Activated CD8-positive, alpha-beta T cell treated with anti-CD3 and anti-CD28 coated beads for 36 hours (primary cell): ENCODE measurements at regions of chr21 and their contacts with region 1.

Region 1: DNA sequence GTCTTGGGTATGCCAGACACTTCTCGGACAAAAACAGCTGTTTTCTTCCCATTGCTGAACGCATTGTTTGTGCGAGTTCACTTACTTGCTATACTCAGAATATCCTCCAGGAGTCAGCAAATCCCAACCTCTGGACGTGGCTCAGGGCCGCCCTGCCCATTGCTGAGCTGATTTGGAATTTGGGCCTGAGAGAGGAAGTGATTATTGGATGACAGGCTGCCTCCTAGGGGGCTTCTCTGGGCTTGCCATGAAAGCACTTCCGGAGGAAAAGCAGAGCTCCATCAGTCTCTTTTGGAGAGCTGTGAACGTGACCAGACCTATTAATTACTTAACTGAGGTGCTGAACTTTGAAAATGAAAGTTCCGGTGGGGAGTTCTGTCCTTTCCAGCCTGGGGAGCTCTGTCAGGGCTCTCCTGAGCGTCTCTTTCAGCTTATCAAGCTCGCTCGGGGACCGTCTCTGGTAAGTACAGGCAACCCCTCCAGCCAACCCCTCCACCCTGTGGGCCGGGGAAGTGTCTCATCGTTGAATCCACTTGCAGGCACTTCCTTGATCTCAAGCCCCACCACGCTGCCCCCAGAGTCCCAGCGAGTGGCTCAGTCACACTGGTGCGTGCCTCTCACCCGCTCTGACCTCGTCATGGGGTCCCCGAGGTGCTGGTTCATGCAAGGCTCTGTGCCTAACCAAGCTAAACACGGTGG is 76.9 kb downstream of the CLIC6 start:
- DNase-seq: peak; percentile 69
- ATAC-seq: peak; percentile 95
- H3K4me3 Mint-ChIP-seq: peak overlapping the region; percentile 44
- H3K27ac Mint-ChIP-seq: peak overlapping the region; percentile 30
- H3K4me1 Mint-ChIP-seq: peaks cover 3% of the 10 kb centered on the region
- H3K27me3 Mint-ChIP-seq: peaks cover 11% of the 10 kb centered on the region
- CTCF ChIP-seq: peak; percentile 91

Region 2: GRCh38 chr21:34762761-34763160 is 17.1 kb after region 1 on chr21:
- CTCF ChIA-PET with region 1: interaction called, 11 read pairs
- POLR2A ChIA-PET with region 1: no interaction called
- intact Hi-C with region 1: no loop called
- DNase-seq: no peak
- ATAC-seq: no peak
- H3K4me3 Mint-ChIP-seq: no peak overlapping the region
- H3K27ac Mint-ChIP-seq: no peak overlapping the region
- H3K4me1 Mint-ChIP-seq: no peaks in the 10 kb centered on the region
- H3K27me3 Mint-ChIP-seq: no peaks in the 10 kb centered on the region
- CTCF ChIP-seq: no peak

Region 3: GRCh38 chr21:35400233-35400957 is 654.7 kb after region 1 on chr21:
- CTCF ChIA-PET with region 1: interaction called, 19 read pairs
- POLR2A ChIA-PET with region 1: no interaction called
- intact Hi-C with region 1: loop called (anchors 5 kb)
- DNase-seq: peak; percentile 43
- ATAC-seq: peak; percentile 93
- H3K4me3 Mint-ChIP-seq: no peak overlapping the region
- H3K27ac Mint-ChIP-seq: no peak overlapping the region
- H3K4me1 Mint-ChIP-seq: peaks cover 15% of the 10 kb centered on the region
- H3K27me3 Mint-ChIP-seq: peaks cover 1% of the 10 kb centered on the region
- CTCF ChIP-seq: peak; percentile 73

Region 4: GRCh38 chr21:35840197-35840799 is 1094.6 kb after region 1 on chr21:
- CTCF ChIA-PET with region 1: interaction called, 18 read pairs
- POLR2A ChIA-PET with region 1: no interaction called
- intact Hi-C with region 1: loop called (anchors 5 kb)
- DNase-seq: peak; percentile 77
- ATAC-seq: no peak
- H3K4me3 Mint-ChIP-seq: no peak overlapping the region
- H3K27ac Mint-ChIP-seq: no peak overlapping the region
- H3K4me1 Mint-ChIP-seq: no peaks in the 10 kb centered on the region
- H3K27me3 Mint-ChIP-seq: no peaks in the 10 kb centered on the region
- CTCF ChIP-seq: peak; percentile 91